Activated T-helper 1 cell treated with anti-CD3 and anti-CD28 coated beads, Interleukin-12 subunit alpha, Interleukin-12 subunit beta, Interleukin-2, Interleukin-4 antibody, amounts not matched to agents 30 ng/mL and 10 ng/mL and 1 ng/mL, durations not matched to agents 14 hours and 24 hours and 36 hours (primary cell): ENCODE measurements at regions of chr12 and their contacts with region 1.

Region 1: DNA sequence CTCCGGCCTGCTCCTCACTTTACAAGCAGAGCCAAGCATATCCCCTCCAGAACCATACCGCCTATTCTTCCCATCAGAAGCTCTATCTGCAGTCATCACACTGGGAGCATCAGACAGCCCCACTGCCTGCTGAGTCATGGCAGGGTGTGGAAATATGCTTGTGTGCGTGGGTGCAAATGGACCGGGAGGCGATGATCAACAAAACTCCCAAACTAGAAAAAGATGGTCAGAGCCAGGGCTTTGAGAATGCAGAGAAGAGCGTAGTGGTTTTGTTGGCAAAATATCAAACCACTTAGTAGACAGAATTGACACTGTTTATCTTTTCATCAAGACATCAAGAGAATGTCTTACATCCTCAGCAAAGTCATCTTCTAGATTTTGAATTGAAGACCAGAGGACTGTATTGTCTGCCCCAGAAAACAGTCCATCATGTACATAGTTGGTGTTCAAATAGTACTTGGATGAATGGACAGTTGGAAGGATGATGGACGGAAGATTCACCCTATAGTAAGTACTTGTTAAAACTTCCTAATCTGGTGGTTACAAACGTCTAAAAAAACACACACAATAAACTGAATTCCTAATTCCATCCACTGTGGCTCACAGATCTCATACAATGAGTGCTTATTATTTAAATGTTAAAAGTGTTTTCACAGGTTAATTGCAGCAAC is 54.9 kb downstream of the VWF start:
- DNase-seq: no peak
- H3K4me3 Mint-ChIP-seq: no peak overlapping the region
- H3K27ac Mint-ChIP-seq: peak overlapping the region; percentile 83
- H3K4me1 Mint-ChIP-seq: peaks cover 28% of the 10 kb centered on the region
- H3K27me3 Mint-ChIP-seq: peaks cover 20% of the 10 kb centered on the region

Region 2: DNA sequence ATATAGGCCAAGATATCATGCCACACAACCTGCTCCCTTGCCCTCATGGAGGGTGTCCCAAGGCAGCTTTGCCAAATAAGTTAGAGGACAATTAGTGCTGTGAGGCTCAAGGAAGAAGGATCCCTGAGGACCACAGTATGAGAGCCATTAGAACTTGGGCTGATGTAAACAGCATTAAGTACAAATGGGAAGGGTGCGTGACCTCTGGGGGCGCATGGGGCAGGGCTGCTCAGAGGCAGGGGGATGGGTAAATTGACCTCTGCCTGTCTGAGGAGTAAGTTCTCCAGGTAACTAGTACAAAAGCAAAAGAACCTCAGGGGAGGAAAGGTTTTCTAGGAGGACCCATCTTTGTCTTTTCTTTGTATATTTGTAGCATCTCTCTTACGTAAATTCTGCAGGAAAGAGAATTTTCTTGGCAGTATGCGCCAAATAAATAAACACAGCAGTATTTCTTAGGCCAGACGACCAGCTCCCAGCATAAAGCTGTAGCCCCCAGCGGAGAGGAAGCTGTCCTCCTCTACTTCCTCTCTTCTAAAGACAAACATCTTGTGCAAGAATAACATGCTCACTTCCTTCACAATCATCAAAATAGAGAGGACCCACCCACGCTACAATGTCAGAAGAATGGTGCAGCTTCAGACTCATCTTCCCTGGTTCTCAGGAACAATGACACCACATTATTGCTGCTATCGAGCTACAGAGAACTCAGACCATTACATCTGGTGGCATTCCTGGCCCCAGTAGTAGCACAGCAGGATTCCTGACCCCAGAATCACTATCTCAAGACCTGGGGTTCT is 71.3 kb after region 1 on chr12:
- intact Hi-C with region 1: loop called (anchors 2 kb)
- DNase-seq: no peak
- H3K4me3 Mint-ChIP-seq: peak overlapping the region; percentile 48
- H3K27ac Mint-ChIP-seq: peak overlapping the region; percentile 93
- H3K4me1 Mint-ChIP-seq: peaks cover 38% of the 10 kb centered on the region
- H3K27me3 Mint-ChIP-seq: no peaks in the 10 kb centered on the region